ENCODE measurements at regions of chr18 and their contacts with region 1.

Region 1: DNA sequence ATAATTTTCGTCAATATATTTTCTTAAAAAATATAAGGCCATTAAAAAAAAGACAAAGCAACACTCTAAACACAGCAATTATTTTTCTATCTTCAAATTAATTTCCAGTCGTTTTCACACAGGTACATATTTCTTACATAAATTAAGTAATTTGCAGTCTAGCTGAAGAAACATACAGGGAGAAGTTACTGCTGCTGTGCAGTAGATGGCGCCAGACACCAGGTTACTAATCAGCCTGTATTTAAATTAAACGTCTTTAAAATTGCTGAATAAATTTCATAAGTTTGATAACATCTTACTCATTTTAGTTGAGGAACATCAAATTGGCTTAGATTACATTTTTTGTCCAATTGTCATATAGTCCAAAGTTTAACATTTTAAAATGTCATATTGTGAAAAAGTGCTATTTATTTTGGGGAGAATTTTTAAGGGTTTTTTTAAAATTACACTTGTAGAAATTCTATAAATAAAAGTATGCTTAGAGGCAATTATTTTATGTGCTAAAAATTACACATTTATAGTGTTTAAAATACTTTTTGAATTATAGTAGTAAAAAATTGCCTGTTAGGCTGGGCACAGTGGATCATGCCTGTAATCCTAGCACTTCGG is 88.4 kb downstream of the PMAIP1 start:
- DNase-seq: peak in 4 of 5 donors; percentile 33 to 51 (median 38)
- H3K4me3 ChIP-seq: no peak overlapping the region
- H3K27ac ChIP-seq: no peak overlapping the region
- H3K4me1 ChIP-seq: no peaks in the 10 kb centered on the region
- H3K27me3 ChIP-seq: no peaks in the 10 kb centered on the region
- CTCF ChIP-seq: peak in 2 of 3 donors; percentile 52 to 82
- EP300 ChIP-seq: no peak
- POLR2A ChIP-seq: no peak

Region 2: GRCh38 chr18:60549338-60549960 is 561.2 kb after region 1 on chr18:
- intact Hi-C with region 1: loop called in 1 of 4 experiments (anchors 2 kb)
- DNase-seq: no peak
- H3K4me3 ChIP-seq: no peak overlapping the region
- H3K27ac ChIP-seq: no peak overlapping the region
- H3K4me1 ChIP-seq: peaks cover 2% of the 10 kb centered on the region
- H3K27me3 ChIP-seq: no peaks in the 10 kb centered on the region
- CTCF ChIP-seq: peak in 1 of 3 donors; percentile 40
- EP300 ChIP-seq: no peak
- POLR2A ChIP-seq: no peak

Region 3: GRCh38 chr18:61502472-61502871 is 1514.3 kb after region 1 on chr18:
- intact Hi-C with region 1: loop called in 1 of 4 experiments (anchors 10 kb)
- DNase-seq: peak in 2 of 5 donors; percentile 16 to 19
- H3K4me3 ChIP-seq: no peak overlapping the region
- H3K27ac ChIP-seq: no peak overlapping the region
- H3K4me1 ChIP-seq: no peaks in the 10 kb centered on the region
- H3K27me3 ChIP-seq: no peaks in the 10 kb centered on the region
- CTCF ChIP-seq: peak in 2 of 3 donors; percentile 34 to 45
- EP300 ChIP-seq: no peak
- POLR2A ChIP-seq: no peak